ENCODE measurements at regions of chr22 and their contacts with region 1.

Region 1: GRCh38 chr22:46762238-46763050 is at the start of gene TBC1D22A:
- DNase-seq: peak; percentile 91
- ATAC-seq: peak; percentile 89
- H3K4me3 ChIP-seq: peak within 1 kb of the TSS; percentile 100
- H3K27ac ChIP-seq: peak within 1 kb of the TSS; percentile 80
- H3K4me1 ChIP-seq: peaks cover 19% of the 10 kb centered on the region
- H3K27me3 ChIP-seq: no peaks in the 10 kb centered on the region
- CTCF ChIP-seq: no peak
- total RNA-seq, gene TBC1D22A: 12.2 and 14.3 TPM in 2 replicates

Region 2: GRCh38 chr22:46693634-46694415 is 68.6 kb before region 1 on chr22:
- CTCF ChIA-PET with region 1: no interaction called
- POLR2A ChIA-PET with region 1: no interaction called
- intact Hi-C with region 1: no loop called
- DNase-seq: no peak
- ATAC-seq: no peak
- H3K4me3 ChIP-seq: no peak overlapping the region
- H3K27ac ChIP-seq: no peak overlapping the region
- H3K4me1 ChIP-seq: no peaks in the 10 kb centered on the region
- H3K27me3 ChIP-seq: no peaks in the 10 kb centered on the region
- CTCF ChIP-seq: no peak

Region 3: DNA sequence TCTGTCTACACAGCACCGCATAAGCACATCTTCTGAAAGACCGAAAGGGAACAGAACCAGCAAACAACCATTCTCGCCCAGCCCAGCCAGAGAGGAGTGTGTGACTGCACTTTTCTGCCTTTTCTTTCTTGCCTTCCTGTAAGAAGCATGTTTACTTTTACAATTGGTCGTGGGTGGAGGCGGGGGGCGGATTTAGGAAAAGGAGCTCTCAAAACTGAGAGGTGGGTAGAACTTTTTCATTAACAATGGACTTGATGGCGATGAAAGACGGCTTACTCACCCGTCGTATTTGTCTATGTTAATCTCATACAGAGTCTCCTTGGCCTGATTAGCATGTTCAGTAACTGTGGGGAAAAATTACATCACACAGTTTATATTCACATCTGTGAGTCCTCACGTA is 51.6 kb before region 1 on chr22:
- CTCF ChIA-PET with region 1: no interaction called
- POLR2A ChIA-PET with region 1: no interaction called
- intact Hi-C with region 1: no loop called
- DNase-seq: no peak
- ATAC-seq: no peak
- H3K4me3 ChIP-seq: no peak overlapping the region
- H3K27ac ChIP-seq: no peak overlapping the region
- H3K4me1 ChIP-seq: no peaks in the 10 kb centered on the region
- H3K27me3 ChIP-seq: no peaks in the 10 kb centered on the region
- CTCF ChIP-seq: no peak

Region 4: GRCh38 chr22:46742701-46743553 is 19.5 kb before region 1 on chr22:
- CTCF ChIA-PET with region 1: no interaction called
- POLR2A ChIA-PET with region 1: interaction called, 3 read pairs
- intact Hi-C with region 1: loop called (anchors 2 kb)
- DNase-seq: peak; percentile 83
- ATAC-seq: peak; percentile 85
- H3K4me3 ChIP-seq: no peak overlapping the region
- H3K27ac ChIP-seq: peak overlapping the region; percentile 70
- H3K4me1 ChIP-seq: peaks cover 12% of the 10 kb centered on the region
- H3K27me3 ChIP-seq: no peaks in the 10 kb centered on the region
- CTCF ChIP-seq: no peak

Region 5: GRCh38 chr22:46845296-46846149 is 83.1 kb after region 1 on chr22:
- CTCF ChIA-PET with region 1: no interaction called
- POLR2A ChIA-PET with region 1: no interaction called
- intact Hi-C with region 1: no loop called
- DNase-seq: peak; percentile 38
- ATAC-seq: peak; percentile 35
- H3K4me3 ChIP-seq: peak overlapping the region; percentile 49; the same call in 1 of the 2 replicates
- H3K27ac ChIP-seq: peak overlapping the region; percentile 18
- H3K4me1 ChIP-seq: peaks cover 27% of the 10 kb centered on the region
- H3K27me3 ChIP-seq: no peaks in the 10 kb centered on the region
- CTCF ChIP-seq: peak; percentile 68

Region 6: DNA sequence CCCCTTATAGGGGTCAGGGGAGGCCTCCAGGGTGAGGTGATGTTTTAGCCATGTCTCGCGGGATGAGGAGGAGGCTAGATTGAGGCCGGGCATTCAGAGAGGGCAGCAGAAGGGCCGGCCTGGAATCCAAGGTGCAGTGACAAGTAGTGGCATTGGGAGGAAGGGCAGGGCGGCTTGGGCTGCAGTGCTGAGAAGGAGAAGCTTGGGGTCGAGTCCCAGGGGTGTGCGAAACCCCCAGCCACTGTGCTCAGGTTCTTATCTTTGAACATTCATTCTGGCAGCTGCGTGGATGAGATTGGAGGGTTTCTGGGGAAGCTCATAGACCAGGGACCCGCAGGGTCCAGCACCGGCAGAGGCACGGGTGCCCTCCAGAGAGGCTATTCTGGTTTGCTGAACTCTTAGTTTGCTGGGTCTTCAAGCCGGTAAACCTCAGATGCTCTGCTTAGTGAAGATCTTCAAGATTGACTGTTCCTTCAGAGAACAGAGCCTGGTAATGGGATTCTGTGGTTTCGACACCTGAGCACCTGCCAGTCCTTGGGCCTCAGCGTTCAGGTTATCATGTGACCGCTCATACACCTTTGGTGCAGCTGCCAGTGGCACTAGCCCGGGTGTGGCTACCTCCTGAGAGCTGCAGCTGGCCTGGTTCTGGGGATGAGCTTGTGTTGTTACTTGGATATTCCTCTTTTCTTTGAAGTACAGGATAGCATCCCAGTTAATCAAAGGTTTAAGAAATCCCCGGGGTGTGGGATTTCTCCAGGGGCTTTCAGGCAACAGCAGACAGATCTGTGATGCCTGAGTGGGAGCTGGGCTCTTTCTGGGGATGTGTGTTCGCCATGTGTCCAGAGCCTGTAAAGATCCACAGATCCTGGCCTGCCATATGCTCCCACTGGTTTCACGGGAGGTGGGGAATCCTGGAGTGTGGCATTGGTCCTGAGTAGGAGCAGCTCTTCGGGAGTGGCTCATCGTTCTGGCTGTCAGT is 152.8 kb after region 1 on chr22:
- CTCF ChIA-PET with region 1: no interaction called
- POLR2A ChIA-PET with region 1: no interaction called
- intact Hi-C with region 1: no loop called
- DNase-seq: no peak
- ATAC-seq: no peak
- H3K4me3 ChIP-seq: no peak overlapping the region
- H3K27ac ChIP-seq: no peak overlapping the region
- H3K4me1 ChIP-seq: no peaks in the 10 kb centered on the region
- H3K27me3 ChIP-seq: no peaks in the 10 kb centered on the region
- CTCF ChIP-seq: no peak